WTC11 (cell line): ENCODE measurements at regions of chr15 and their contacts with region 1.

Region 1: GRCh38 chr15:67967871-67968431 is 86.2 kb upstream of the PIAS1 start:
- DNase-seq: peak; percentile 83
- ATAC-seq: peak; percentile 96
- H3K4me3 Mint-ChIP-seq: peak overlapping the region; percentile 74
- H3K27ac Mint-ChIP-seq: no peak overlapping the region
- H3K4me1 Mint-ChIP-seq: peaks cover 22% of the 10 kb centered on the region
- H3K27me3 Mint-ChIP-seq: no peaks in the 10 kb centered on the region
- CTCF ChIP-seq: no peak

Region 2: GRCh38 chr15:68154923-68155559 is 187.1 kb after region 1 on chr15:
- CTCF ChIA-PET with region 1: interaction called, 14 read pairs
- POLR2A ChIA-PET with region 1: no interaction called
- DNase-seq: peak; percentile 28
- ATAC-seq: peak; percentile 59
- H3K4me3 Mint-ChIP-seq: no peak overlapping the region
- H3K27ac Mint-ChIP-seq: 0 out of 2 replicates have a peak overlapping the region, but pooled peaks have one; percentile 67
- H3K4me1 Mint-ChIP-seq: no peaks in the 10 kb centered on the region
- H3K27me3 Mint-ChIP-seq: no peaks in the 10 kb centered on the region
- CTCF ChIP-seq: peak; percentile 46